ENCODE measurements at regions of chr12 and their contacts with region 1.

Region 1: DNA sequence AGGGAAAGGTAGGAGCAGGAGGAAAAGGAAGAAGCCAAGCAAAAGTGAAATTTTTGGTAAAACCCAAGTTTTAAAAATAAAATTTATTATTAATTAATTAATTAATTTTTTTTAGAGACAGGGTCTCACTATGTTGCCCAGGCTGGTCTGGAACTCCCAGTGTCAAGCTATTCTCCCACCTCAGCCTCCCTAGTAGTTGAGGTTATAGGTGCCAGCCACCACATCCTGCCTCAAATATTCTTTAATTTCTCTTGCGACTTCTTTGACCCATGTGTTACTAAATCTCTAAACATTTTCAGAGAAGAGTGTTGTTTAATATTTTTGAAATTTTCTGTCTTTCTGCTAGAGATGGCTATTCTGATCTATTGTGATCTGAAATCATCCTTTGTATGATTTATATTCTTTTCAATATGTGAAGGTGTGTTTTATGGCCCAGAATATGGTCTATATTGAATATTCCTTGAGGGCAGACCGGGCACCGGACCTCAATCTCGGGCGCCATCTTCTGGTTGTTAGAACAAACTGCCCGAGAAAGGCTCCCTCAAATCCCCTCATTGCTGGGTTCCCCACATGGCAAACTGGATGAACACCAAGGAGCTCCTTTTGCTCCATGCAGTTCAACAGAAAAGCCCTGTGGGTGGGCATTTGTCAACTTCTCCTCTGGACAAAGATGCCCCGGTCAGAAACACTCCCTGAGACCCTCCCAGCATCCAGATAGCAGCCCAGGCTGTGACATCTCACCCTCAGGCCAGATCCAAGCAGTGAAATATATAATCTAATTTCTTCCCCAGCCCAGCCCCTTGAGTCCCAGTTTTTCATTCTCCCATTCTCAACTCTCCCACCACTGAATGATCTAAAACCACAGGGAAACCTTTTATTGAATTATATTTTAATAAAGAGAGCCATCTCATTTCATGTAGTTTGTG is 110.5 kb downstream of the ASCL4 start:
- DNase-seq: peak; percentile 61
- H3K4me3 Mint-ChIP-seq: no peak overlapping the region
- H3K27ac Mint-ChIP-seq: no peak overlapping the region
- H3K4me1 Mint-ChIP-seq: no peaks in the 10 kb centered on the region
- H3K27me3 Mint-ChIP-seq: peaks cover 17% of the 10 kb centered on the region

Region 2: GRCh38 chr12:107679336-107679735 is 205.7 kb before region 1 on chr12:
- CTCF ChIA-PET with region 1: interaction called, 11 read pairs
- DNase-seq: no peak
- H3K4me3 Mint-ChIP-seq: no peak overlapping the region
- H3K27ac Mint-ChIP-seq: no peak overlapping the region
- H3K4me1 Mint-ChIP-seq: peaks cover 1% of the 10 kb centered on the region
- H3K27me3 Mint-ChIP-seq: peaks cover 40% of the 10 kb centered on the region

Region 3: GRCh38 chr12:107730618-107731341 is 154.3 kb before region 1 on chr12:
- CTCF ChIA-PET with region 1: no interaction called
- DNase-seq: no peak
- H3K4me3 Mint-ChIP-seq: no peak overlapping the region
- H3K27ac Mint-ChIP-seq: no peak overlapping the region
- H3K4me1 Mint-ChIP-seq: no peaks in the 10 kb centered on the region
- H3K27me3 Mint-ChIP-seq: no peaks in the 10 kb centered on the region

Region 4: DNA sequence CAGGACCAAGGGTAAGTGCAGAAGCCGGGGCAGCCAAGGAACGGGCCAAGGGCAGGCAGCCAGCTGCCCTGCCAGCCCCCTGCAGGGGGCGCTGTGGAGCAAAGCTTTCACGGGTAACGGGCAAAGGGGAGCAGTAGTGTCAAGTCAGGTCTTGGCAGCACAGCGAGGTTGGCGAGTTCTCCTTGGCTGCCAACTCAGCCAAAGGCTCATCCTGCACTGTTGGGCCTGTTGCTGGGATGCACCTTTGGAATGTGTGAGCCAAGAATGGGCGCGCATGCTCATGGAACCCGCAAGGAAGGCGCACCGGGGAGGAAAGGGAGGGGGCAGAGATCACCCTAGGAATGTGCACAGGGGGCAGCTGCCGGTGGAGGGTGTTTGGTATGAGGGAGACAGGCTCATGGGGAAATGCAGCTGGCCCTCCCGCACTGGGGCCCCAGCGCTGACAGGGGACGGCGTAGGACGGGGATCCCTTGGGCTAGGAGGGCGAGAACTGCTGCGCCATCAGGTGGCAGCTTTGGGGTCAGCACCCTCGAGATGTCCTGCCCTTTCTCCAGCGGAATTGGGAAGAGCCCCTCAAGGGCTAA is 27.5 kb after region 1 on chr12:
- CTCF ChIA-PET with region 1: interaction called, 14 read pairs
- DNase-seq: peak; percentile 68
- H3K4me3 Mint-ChIP-seq: peak overlapping the region; percentile 66
- H3K27ac Mint-ChIP-seq: no peak overlapping the region
- H3K4me1 Mint-ChIP-seq: peaks cover 3% of the 10 kb centered on the region
- H3K27me3 Mint-ChIP-seq: peaks cover 39% of the 10 kb centered on the region